ENCODE measurements at regions of chr1 and their contacts with region 1.

Region 1: DNA sequence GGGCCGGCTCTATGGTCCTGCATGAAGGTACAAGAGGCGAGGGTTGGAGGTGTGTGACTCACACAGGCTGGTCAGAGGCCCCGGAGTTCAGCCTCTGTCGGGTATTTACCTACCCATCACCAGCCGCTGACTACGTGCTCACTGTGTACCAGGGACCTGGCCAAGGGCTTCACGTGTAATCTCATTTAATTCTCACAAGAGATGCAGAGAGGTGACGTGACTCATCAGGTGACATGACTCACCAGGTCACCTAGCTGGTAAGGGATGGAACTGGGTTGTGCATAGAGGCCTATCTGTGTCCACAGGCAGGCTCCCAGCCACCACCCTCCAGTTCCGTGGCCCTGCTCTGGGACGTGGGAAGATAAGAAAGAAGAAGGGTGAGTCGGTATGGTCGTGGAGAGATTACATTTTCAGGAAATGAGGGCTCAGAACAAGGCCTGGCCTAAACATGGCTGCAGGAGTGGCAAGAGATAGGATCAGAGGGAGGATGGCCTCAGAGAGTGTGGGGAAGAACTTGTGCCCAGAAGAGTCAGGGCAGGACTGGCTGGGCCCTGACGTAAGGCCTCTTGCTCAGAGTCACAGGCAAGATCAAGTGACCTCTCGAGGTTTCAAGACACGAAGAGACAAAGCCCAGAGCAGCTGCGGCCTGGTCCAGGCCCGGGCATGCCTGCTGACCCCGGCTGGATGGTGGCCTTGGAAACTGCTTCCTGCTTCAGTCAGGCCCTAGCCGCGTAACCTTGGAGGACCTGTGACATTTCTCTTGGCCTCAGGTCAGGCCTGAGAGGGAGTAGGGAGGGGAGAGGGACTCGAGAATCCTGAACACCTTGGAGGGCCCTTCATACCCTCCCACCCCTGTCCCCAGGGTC is 52.7 kb upstream of the WASF2 start:
- DNase-seq: peak in 4 of 5 donors; percentile 62 to 88 (median 79)
- ATAC-seq: peak; percentile 39 to 80 (median 64)
- H3K4me3 ChIP-seq: no peak overlapping the region
- H3K27ac ChIP-seq: peak overlapping the region; percentile 8 to 94 (median 88)
- H3K4me1 ChIP-seq: peaks cover 12 to 95% (median 80%) of the 10 kb centered on the region in 12 donors
- H3K27me3 ChIP-seq: no peaks in the 10 kb centered on the region
- CTCF ChIP-seq: no peak
- POLR2A ChIP-seq: peak in 1 of 2 donors; percentile 13

Region 2: GRCh38 chr1:27430903-27431600 is 111.6 kb before region 1 on chr1:
- intact Hi-C with region 1: loop called in 1 of 10 experiments (anchors 5 kb)
- DNase-seq: peak in 1 of 5 donors; percentile 44
- ATAC-seq: peak; percentile 27 to 53 (median 42)
- H3K4me3 ChIP-seq: peak overlapping the region in 7 of 12 donors; percentile 2 to 26 (median 5)
- H3K27ac ChIP-seq: peak overlapping the region; percentile 82 to 94 (median 86)
- H3K4me1 ChIP-seq: peaks cover 35 to 100% (median 93%) of the 10 kb centered on the region in 12 donors
- H3K27me3 ChIP-seq: no peaks in the 10 kb centered on the region
- CTCF ChIP-seq: peak in 5 of 12 donors; percentile 12 to 42 (median 28)
- POLR2A ChIP-seq: no peak

Region 3: DNA sequence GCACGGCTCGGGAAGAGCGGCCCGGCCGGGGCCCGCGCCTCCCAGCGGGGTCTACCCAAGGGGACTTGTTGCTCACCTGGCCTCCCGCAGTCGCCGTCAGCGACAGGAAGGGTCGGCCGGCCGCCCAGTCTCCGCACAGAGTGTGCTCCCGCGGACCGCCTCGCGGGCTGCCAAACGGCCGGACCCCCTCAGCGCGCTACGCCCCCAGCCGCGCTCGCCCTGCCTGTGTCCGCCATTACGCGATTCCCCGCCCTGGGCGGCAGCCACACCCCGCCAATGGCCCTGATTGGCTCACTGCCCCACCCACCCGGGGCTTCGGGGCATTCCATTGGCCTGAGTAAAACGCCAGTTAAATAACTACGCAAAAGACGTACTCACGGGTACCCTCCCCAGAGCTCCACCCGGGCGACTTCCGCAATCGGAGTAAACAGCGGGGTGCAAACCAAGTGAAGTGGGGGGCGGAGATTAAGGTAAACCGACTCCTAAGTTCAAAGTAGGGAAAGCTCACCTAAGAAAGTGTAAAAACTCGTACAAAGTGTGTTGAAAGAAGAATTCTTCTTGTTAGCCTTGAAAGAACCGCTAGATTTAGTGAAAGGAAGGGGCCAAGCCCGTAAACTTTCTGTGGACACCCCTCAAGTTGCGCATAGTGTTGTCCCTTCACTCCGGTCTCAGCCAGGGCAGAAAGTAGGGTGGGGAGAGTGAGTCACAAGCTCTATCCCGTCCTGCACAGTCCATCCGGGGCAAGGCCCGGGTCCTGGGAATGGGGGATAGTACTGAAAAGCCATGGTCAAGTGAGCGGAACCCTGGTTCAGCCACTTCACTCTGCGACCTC is 52.5 kb before region 1 on chr1 and contains the start of gene WASF2:
- intact Hi-C with region 1: no loop called
- DNase-seq: peak; percentile 97 to 98 (median 98)
- ATAC-seq: peak; percentile 93 to 97 (median 96)
- H3K4me3 ChIP-seq: peak within 1 kb of the TSS; percentile 77 to 100 (median 96)
- H3K27ac ChIP-seq: peak within 1 kb of the TSS; percentile 98 to 100 (median 100)
- H3K4me1 ChIP-seq: peaks cover 5 to 62% (median 37%) of the 10 kb centered on the region in 12 donors
- H3K27me3 ChIP-seq: no peaks in the 10 kb centered on the region
- CTCF ChIP-seq: peak in 1 of 12 donors; percentile 5
- POLR2A ChIP-seq: peak; percentile 83 to 96
- total RNA-seq, gene WASF2: 27.5 to 103 (median 47.9) TPM

Region 4: GRCh38 chr1:27598902-27599528 is 56.4 kb after region 1 on chr1:
- intact Hi-C with region 1: no loop called
- DNase-seq: peak; percentile 77 to 92 (median 80)
- ATAC-seq: peak; percentile 10 to 65 (median 61)
- H3K4me3 ChIP-seq: peak overlapping the region in 7 of 12 donors; percentile 15 to 100 (median 22)
- H3K27ac ChIP-seq: peak overlapping the region; percentile 40 to 99 (median 98)
- H3K4me1 ChIP-seq: peaks cover 12 to 87% (median 80%) of the 10 kb centered on the region in 12 donors
- H3K27me3 ChIP-seq: no peaks in the 10 kb centered on the region
- CTCF ChIP-seq: no peak
- POLR2A ChIP-seq: no peak